Activated T-helper 2 cell treated with anti-CD3 and anti-CD28 coated beads, Interferon-gamma antibody, Interleukin-2, Interleukin-4, amounts not matched to agents 10 μg/mL and 5 μg/mL and 100 μg/mL, durations not matched to agents 14 hours and 24 hours and 36 hours (primary cell): ENCODE measurements at regions of chr22 and their contacts with region 1.

Region 1: GRCh38 chr22:32644252-32645100 is 157.0 kb upstream of the TIMP3 start:
- DNase-seq: no peak
- H3K4me3 Mint-ChIP-seq: no peak overlapping the region
- H3K27ac Mint-ChIP-seq: peak overlapping the region; percentile 68
- H3K4me1 Mint-ChIP-seq: peaks cover 22% of the 10 kb centered on the region
- H3K27me3 Mint-ChIP-seq: no peaks in the 10 kb centered on the region

Region 2: DNA sequence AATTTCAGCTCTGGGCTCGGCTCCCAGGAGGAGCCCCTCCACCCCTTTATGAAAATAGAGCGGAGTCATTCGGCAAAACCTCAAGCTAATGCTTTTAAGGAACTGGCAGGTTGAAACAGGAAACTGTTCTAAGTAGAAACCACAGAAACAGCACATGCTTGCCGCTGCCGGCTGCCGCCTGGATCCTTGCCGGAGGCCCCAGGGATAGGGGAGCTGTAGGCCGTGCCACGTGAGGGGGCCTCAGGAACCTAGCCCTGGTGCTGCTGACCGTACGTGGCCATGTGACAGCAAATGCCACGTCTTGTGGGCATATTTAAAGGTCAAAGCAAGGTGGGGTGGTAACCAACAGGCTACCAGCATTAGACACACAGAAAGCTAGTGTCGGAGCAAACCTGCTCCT is 79.2 kb after region 1 on chr22:
- intact Hi-C with region 1: loop called (anchors 5 kb)
- DNase-seq: peak; percentile 26
- H3K4me3 Mint-ChIP-seq: no peak overlapping the region
- H3K27ac Mint-ChIP-seq: peak overlapping the region; percentile 20
- H3K4me1 Mint-ChIP-seq: peaks cover 33% of the 10 kb centered on the region
- H3K27me3 Mint-ChIP-seq: peaks cover 23% of the 10 kb centered on the region